ENCODE measurements at regions of chr11 and their contacts with region 1.

Region 1: GRCh38 chr11:9137293-9138132 is 46.1 kb upstream of the SCUBE2 start:
- DNase-seq: peak; percentile 27
- ATAC-seq: peak; percentile 100
- H3K4me3 ChIP-seq: no peak overlapping the region
- H3K27ac ChIP-seq: no peak overlapping the region
- H3K4me1 ChIP-seq: no peaks in the 10 kb centered on the region
- H3K27me3 ChIP-seq: no peaks in the 10 kb centered on the region
- CTCF ChIP-seq: peak; percentile 91 to 99 (median 97)
- EP300 ChIP-seq: no peak
- POLR2A ChIP-seq: no peak
- RAD21 ChIP-seq: peak; percentile 95

Region 2: DNA sequence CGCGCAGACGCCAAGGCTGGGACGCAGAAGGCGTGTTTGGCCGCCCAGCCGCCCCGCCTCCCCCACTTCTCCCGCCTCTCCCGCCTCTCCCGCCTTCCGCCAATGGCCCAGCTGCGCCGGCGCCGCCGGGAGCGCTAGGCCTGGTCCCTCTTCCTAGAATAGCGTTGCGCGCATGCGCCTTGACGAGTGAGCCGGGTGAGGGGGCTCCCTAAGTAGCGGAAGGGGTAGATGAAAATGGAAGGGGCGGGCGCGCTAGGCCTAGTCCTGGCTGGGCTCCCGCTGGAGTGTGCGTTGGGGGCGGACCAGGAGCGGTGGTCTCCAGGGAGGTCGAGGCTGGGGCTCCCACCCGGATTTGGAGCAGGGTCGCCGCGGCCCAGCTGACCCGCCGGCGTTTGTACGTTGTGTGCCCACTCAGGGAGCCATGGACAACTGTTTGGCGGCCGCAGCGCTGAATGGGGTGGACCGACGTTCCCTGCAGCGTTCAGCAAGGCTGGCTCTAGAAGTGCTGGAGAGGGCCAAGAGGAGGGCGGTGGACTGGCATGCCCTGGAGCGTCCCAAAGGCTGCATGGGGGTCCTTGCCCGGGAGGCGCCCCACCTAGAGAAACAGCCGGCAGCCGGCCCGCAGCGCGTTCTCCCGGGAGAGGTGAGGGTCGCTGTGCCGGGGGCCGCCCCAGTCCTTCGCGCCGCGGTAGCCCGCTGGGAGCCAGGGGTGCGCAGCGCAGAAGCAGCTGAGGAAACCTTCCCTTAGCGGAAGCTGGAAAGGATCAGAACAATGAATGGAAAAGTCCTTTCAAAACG is 226.3 kb before region 1 on chr11 and contains the start of gene AKIP1:
- CTCF ChIA-PET with region 1: interaction called, 61 read pairs
- POLR2A ChIA-PET with region 1: interaction called, 7 read pairs
- RAD21 ChIA-PET with region 1: interaction called, 20 read pairs
- SMC1A ChIA-PET with region 1: interaction called, 20 read pairs
- in situ Hi-C with region 1: no loop called
- intact Hi-C with region 1: loop called (anchors 1 kb)
- DNase-seq: peak; percentile 65
- ATAC-seq: peak; percentile 88
- H3K4me3 ChIP-seq: peak within 1 kb of the TSS; percentile 95
- H3K27ac ChIP-seq: peak within 1 kb of the TSS; percentile 65
- H3K4me1 ChIP-seq: peaks cover 11% of the 10 kb centered on the region
- H3K27me3 ChIP-seq: no peaks in the 10 kb centered on the region; a peak in 1 of 4 replicates
- CTCF ChIP-seq: no peak
- EP300 ChIP-seq: no peak
- POLR2A ChIP-seq: peak; percentile 61; the same call in 1 of the 2 replicates
- RAD21 ChIP-seq: no peak
- polyA plus RNA-seq, gene AKIP1: 5.1 to 14.7 TPM

Region 3: DNA sequence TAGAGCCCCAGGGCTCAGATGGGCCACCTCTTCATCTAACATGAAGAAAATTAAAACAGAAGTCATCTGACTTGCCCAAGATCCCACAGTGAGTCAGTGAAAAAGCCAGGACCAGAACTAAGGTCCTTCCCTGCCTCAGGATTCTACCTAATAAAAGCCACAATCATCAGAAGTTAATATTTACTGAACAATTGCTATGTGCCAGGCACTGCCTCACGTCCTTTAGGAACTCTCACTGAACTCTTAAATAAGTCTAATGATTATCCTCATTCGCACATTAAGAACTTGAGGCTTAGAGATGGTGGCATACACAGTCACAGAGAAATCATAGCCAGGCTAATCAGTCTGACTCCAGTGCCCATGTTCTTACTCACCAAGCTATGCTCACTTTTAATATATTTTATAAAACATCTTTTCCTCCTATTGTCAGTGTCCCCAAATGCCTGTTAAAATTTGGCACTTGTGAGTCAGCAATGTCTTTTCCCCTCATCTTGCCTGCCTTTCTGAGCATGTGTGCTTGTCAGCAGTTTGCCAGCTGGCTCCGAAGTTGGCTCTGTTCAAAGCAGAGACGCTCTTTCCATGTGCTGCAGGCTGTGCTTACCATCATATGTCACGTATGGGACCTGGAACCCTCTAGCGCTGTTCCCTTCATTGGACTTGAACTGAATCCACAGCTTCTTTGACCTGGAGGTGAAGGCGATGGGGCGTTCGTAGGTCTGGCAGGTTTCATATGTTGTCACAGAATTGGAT is 112.2 kb before region 1 on chr11:
- CTCF ChIA-PET with region 1: interaction called, 14 read pairs
- POLR2A ChIA-PET with region 1: no interaction called
- RAD21 ChIA-PET with region 1: interaction called, 3 read pairs
- SMC1A ChIA-PET with region 1: interaction called, 5 read pairs
- in situ Hi-C with region 1: no loop called
- intact Hi-C with region 1: no loop called
- DNase-seq: no peak
- ATAC-seq: no peak
- H3K4me3 ChIP-seq: no peak overlapping the region
- H3K27ac ChIP-seq: no peak overlapping the region
- H3K4me1 ChIP-seq: no peaks in the 10 kb centered on the region
- H3K27me3 ChIP-seq: no peaks in the 10 kb centered on the region
- CTCF ChIP-seq: no peak
- EP300 ChIP-seq: no peak
- POLR2A ChIP-seq: no peak
- RAD21 ChIP-seq: no peak

Region 4: GRCh38 chr11:9092853-9093778 is 44.4 kb before region 1 on chr11:
- CTCF ChIA-PET with region 1: interaction called, 13 read pairs
- POLR2A ChIA-PET with region 1: no interaction called
- RAD21 ChIA-PET with region 1: interaction called, 7 read pairs
- SMC1A ChIA-PET with region 1: interaction called, 8 read pairs
- in situ Hi-C with region 1: no loop called
- intact Hi-C with region 1: loop called (anchors 5 kb)
- DNase-seq: no peak
- ATAC-seq: peak; percentile 46; the same call in 2 of the 3 replicates
- H3K4me3 ChIP-seq: no peak overlapping the region
- H3K27ac ChIP-seq: no peak overlapping the region
- H3K4me1 ChIP-seq: no peaks in the 10 kb centered on the region
- H3K27me3 ChIP-seq: peaks cover 13 to 26% of the 10 kb centered on the region in 2 experiments
- CTCF ChIP-seq: peak; percentile 23 to 31 (median 24); a peak in 3 of 6 replicates
- EP300 ChIP-seq: no peak
- POLR2A ChIP-seq: no peak
- RAD21 ChIP-seq: no peak

Region 5: GRCh38 chr11:9148035-9148434 is 10.5 kb after region 1 on chr11:
- CTCF ChIA-PET with region 1: interaction called, 16 read pairs
- POLR2A ChIA-PET with region 1: no interaction called
- RAD21 ChIA-PET with region 1: no interaction called
- SMC1A ChIA-PET with region 1: interaction called, 8 read pairs
- in situ Hi-C with region 1: no loop called
- intact Hi-C with region 1: no loop called
- DNase-seq: no peak
- ATAC-seq: no peak
- H3K4me3 ChIP-seq: no peak overlapping the region
- H3K27ac ChIP-seq: no peak overlapping the region
- H3K4me1 ChIP-seq: no peaks in the 10 kb centered on the region
- H3K27me3 ChIP-seq: no peaks in the 10 kb centered on the region
- CTCF ChIP-seq: no peak
- EP300 ChIP-seq: no peak
- POLR2A ChIP-seq: no peak
- RAD21 ChIP-seq: no peak

Measured in GM12878 (cell line).